ENCODE measurements at regions of chr6 and their contacts with region 1.

Region 1: DNA sequence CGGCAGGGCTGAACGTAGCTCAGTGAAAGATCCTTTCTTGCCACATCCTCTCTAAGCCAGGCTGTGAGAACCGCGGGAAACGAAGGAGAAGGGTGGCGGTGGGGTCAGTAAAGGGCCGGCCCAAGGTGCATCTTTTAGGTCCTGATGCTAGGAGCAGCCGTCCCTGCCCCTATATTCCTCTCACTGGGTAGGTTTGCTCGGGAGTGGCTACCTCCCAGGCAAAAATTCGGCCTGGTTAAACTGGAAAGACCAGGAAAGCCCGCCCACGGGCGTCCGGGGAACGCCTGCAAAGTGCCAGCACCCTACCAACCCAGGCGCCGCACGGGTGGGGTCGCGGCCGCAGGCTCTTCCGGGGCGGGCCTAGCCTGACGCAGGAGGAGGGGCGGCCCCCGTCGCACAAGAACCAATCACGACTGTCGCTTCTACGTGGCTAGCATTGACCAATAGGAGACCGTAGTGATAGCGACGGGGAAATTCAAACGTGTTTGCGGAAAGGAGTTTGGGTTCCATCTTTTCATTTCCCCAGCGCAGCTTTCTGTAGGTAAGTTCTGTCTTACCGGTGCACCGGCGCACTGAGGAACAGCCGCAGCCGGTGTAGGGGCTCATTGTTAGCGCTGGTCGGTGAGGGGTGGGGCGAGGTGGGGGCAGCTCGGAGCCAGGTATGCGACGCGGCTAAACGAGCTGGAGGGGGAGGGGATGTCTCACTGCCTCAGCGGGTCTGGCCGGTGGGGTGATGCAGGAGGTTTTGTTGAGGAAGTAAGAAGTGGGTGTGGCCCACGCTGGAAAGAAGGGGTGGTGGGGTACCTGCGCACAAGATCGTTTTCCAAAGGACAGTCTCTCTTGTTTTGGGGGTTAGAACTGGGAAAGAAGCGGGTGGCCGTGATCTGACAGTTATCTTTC is at the start of gene TTK:
- DNase-seq: peak; percentile 95
- ATAC-seq: peak; percentile 100
- total RNA-seq, gene TTK: 0.52 to 0.62 TPM

Region 2: DNA sequence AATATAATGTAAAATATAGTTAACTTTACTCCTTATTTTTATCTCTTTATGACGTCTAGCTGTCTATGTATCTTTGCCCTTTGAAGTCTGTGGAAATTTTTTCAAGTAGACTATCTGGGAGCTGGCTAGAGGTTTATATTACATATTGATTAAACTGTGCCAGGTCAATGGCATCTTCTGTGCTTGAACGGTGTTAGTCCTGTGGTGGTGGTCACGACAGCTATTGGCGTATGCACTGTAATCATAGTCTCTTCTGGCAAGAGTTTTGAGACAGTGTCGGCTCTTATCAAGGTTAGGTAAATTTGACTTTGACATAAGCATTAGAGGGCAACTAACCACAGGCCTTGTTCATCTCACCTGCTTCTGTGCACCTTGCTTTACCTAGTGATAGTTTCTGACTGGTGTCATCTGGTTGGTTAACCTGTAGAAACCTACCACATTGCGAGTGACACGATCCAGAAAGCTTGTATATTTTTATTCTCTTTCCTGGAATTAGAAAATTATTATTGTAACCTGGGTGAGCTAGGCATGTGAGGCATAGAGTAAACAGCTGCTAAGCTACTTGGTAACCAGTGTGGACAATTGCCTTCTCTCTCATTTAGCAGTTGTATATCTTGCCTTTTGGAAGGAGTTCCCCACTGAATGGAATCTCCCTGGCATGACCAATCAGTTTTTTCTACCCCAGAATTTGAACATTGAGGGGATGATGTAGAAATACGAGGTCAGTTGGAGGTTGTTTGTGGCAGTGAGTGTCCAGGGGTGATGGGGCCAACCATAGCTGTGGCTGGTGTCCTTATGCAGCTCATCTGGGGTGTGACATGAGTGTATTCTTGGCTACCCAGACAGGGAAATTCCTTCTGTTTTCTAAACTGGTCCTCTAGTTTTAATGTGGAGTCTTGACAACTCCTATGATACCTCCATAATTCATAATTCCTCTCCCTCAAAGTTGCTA is 327.4 kb before region 1 on chr6:
- intact Hi-C with region 1: no loop called
- DNase-seq: no peak
- ATAC-seq: peak in 1 of 2 donors; percentile 59

Region 3: GRCh38 chr6:79789843-79790242 is 214.6 kb before region 1 on chr6:
- intact Hi-C with region 1: no loop called
- DNase-seq: no peak
- ATAC-seq: no peak

Region 4: DNA sequence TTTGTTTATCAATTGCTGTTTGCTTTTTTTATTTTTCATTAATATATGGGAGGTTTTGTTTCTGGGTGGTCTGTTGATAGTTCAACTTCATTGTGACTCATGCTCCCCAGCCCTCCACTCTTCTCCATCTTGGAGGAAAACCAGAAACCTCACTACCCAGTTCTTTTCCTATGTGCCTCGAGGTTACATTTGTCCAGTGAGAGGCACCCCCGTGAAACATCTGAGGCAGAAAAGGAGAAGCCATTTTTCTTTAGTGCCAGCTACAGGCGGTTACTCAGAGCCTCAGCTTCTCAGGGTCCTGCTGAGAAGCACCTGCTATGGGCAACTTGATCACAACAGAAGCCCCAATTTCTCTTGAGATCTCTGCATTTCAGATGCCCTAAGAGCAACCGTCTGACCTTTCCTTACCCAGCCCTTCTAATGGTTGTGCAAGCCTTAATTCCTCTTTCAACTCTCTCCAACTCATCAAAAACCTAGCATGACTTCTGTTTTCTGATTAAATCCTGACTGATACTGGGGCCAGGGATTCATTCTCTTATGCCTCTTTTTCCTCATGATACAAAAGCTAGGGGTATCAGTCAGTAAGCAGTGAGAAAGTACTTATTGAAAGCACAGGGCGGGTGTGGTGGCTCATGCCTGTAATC is 201.6 kb before region 1 on chr6:
- intact Hi-C with region 1: no loop called
- DNase-seq: no peak
- ATAC-seq: no peak

Region 5: DNA sequence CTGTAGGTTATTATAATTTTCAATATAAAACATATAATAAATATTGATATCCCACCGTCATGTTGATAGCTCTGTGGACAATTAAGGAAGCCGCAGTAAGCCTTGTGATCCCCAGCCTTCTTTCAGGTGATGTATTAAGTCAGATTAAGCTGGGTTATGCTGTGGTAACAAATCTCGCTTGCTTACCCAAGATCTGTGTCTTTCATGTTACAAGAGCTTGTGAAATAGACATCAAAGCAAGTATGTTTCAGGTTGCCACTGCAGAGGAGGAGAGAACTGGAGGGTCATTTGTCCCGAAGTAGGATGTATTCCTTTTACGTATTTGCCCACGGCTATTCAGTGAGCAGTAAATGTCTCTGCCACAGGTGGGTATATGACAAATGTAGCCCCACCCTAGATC is 84.2 kb after region 1 on chr6:
- intact Hi-C with region 1: no loop called
- DNase-seq: no peak
- ATAC-seq: no peak

Region 6: DNA sequence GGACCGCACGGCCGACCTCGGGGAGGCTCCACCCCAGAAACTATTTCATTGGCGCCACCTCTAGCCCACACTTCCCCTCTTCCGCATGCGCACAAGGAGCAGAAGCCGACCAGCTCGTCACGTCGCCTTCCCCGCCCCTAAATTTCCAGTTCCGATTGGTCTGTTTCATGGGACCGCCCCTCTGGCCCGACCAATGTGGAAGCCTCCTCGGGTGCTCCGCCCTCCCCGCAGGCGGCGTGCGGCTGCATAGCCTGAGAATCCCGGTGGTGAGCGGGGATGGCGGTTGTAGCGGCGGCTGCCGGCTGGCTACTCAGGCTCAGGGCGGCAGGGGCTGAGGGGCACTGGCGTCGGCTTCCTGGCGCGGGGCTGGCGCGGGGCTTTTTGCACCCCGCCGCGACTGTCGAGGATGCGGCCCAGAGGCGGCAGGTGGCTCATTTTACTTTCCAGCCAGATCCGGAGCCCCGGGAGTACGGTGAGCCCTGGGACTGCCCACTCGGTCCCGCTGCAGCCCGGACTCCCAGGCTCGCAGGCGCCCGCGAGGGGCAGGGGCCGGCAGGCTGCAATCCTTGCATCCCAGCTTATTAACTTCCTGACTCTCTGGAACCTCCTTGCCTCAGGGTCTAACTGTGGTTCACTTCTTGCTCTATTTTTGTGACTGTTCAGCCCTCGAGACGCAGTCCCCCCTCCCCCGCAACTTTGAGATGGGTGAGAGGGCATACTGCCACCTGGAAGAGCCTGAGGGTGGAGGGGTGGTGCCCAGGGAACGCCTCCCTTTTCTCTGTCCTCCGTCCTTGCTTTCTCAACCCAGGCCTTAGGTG is 102.2 kb after region 1 on chr6 and contains the start of gene BCKDHB:
- intact Hi-C with region 1: loop called in 1 of 2 experiments (anchors 5 kb)
- DNase-seq: peak; percentile 99
- ATAC-seq: peak; percentile 99 to 100
- total RNA-seq, gene BCKDHB: 15.4 to 15.6 TPM

Measured in left cardiac atrium (tissue), 4 donors.